Activated CD4-positive, alpha-beta memory T cell treated with anti-CD3 and anti-CD28 coated beads for 36 hours (primary cell): ENCODE measurements at regions of chr13 and their contacts with region 1.

Region 1: DNA sequence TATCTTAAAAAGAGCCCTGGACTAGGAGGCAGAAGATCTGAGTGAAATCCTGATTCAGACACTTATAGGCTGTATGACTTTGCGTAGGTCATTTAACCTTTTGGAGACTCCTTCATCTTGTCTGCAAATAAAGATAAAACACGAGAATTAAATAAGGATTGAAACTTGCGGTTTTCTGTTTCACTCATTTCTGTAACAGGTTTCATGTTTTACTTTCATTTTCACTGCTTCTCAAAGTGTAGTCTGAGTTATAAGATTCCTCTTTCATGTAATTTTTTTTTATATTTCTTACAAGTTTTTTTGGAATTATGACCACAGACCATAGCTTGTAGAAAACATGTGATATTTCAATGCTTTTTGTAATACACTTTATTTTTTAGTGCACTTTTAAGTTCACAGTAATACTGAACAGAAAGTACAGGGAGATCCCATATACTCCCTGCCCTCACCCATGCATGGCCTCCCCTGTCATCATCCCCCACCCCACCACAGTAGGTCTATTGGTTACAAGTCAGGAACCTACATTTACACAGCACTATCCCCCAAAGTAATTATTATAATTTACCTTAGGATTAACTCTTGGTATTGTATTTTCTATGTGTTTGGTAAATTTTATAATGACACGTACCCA is 174.6 kb downstream of the ITGBL1 start:
- DNase-seq: peak; percentile 50
- H3K4me3 Mint-ChIP-seq: peak overlapping the region; percentile 24
- H3K27ac Mint-ChIP-seq: no peak overlapping the region
- H3K4me1 Mint-ChIP-seq: peaks cover 42% of the 10 kb centered on the region
- H3K27me3 Mint-ChIP-seq: peaks cover 14% of the 10 kb centered on the region

Region 2: DNA sequence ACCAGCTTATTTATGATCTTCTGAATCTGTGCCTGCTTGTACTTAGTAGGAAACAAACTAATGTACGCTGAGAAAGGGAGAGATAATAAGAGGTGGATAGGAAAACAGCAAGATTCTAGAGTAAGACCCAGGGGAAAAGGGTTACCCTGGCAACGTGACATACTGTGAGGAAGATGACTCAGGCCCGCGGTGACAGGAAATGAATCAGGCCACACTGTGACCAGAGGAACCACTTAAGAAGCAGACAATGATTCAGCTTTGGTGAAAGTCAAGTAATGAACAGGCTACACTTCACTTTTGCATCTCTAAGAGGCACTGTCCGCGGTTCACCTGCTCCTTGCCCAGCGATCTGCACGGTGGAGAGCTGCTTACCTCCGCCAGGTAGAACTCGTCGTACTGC is 369.0 kb before region 1 on chr13:
- CTCF ChIA-PET with region 1: no interaction called
- POLR2A ChIA-PET with region 1: no interaction called
- intact Hi-C with region 1: loop called (anchors 1 kb)
- DNase-seq: peak; percentile 77
- H3K4me3 Mint-ChIP-seq: no peak overlapping the region
- H3K27ac Mint-ChIP-seq: no peak overlapping the region
- H3K4me1 Mint-ChIP-seq: peaks cover 4% of the 10 kb centered on the region
- H3K27me3 Mint-ChIP-seq: peaks cover 7% of the 10 kb centered on the region

Region 3: GRCh38 chr13:101514788-101515187 is 112.3 kb before region 1 on chr13:
- CTCF ChIA-PET with region 1: no interaction called
- POLR2A ChIA-PET with region 1: no interaction called
- intact Hi-C with region 1: loop called (anchors 1 kb)
- DNase-seq: no peak
- H3K4me3 Mint-ChIP-seq: no peak overlapping the region
- H3K27ac Mint-ChIP-seq: no peak overlapping the region
- H3K4me1 Mint-ChIP-seq: peaks cover 12% of the 10 kb centered on the region
- H3K27me3 Mint-ChIP-seq: peaks cover 2% of the 10 kb centered on the region

Region 4: GRCh38 chr13:101649490-101650126 is 22.6 kb after region 1 on chr13:
- CTCF ChIA-PET with region 1: no interaction called
- POLR2A ChIA-PET with region 1: no interaction called
- intact Hi-C with region 1: no loop called
- DNase-seq: no peak
- H3K4me3 Mint-ChIP-seq: no peak overlapping the region
- H3K27ac Mint-ChIP-seq: no peak overlapping the region
- H3K4me1 Mint-ChIP-seq: no peaks in the 10 kb centered on the region
- H3K27me3 Mint-ChIP-seq: peaks cover 23% of the 10 kb centered on the region

Region 5: DNA sequence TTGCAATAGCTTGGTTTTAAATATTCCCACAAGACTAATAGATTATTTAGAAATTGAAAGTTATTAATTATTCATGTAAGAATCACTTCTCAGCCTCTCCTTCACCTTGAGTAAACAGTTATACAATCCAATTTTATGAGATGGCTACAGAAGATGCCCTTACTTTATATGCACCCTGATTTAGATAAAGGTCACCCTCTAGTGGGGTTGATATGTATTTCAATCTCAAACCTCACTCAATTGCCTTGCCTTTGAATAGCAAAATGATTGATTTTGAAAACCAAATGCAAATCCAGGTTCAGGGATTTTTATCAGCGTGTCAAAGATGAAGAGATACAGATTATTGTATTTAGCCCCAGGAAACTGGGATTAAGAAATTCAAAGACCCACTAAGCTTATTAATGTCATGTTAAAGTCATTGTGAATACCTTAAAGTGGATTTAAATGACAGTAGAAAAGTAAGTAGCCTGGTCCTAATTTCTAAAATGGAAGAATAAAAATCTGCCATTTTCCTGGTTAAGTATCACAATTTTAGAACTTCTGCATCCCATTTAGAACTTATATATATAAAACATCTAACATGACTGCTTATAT is 130.5 kb after region 1 on chr13:
- CTCF ChIA-PET with region 1: no interaction called
- POLR2A ChIA-PET with region 1: no interaction called
- intact Hi-C with region 1: loop called (anchors 5 kb)
- DNase-seq: no peak
- H3K4me3 Mint-ChIP-seq: no peak overlapping the region
- H3K27ac Mint-ChIP-seq: no peak overlapping the region
- H3K4me1 Mint-ChIP-seq: no peaks in the 10 kb centered on the region
- H3K27me3 Mint-ChIP-seq: peaks cover 15% of the 10 kb centered on the region

Region 6: DNA sequence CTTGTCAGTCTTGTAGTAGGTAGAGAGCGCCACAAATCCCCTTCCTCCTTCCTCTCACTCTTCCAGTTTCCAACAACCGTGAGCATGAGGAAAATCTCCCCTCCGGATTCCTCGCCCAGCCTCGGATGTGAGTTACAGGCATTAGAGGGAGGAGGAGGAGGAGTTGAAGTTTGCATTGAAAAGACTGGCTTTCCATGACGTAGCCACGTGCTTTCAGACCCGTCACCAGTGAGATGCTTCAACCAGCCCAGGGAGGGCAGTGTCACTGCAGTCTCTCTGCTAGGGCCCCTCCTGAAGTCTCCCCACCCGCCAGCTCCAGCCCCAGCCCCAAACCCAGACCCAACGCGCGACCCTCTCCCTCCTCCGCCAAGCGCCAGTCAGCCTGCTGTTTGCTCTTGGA is 775.2 kb after region 1 on chr13:
- CTCF ChIA-PET with region 1: no interaction called
- POLR2A ChIA-PET with region 1: no interaction called
- intact Hi-C with region 1: loop called (anchors 5 kb)
- DNase-seq: peak; percentile 61
- H3K4me3 Mint-ChIP-seq: peak overlapping the region; percentile 42
- H3K27ac Mint-ChIP-seq: no peak overlapping the region
- H3K4me1 Mint-ChIP-seq: peaks cover 26% of the 10 kb centered on the region
- H3K27me3 Mint-ChIP-seq: peaks cover 54% of the 10 kb centered on the region